ENCODE measurements at regions of chr6 and their contacts with region 1.

Region 1: DNA sequence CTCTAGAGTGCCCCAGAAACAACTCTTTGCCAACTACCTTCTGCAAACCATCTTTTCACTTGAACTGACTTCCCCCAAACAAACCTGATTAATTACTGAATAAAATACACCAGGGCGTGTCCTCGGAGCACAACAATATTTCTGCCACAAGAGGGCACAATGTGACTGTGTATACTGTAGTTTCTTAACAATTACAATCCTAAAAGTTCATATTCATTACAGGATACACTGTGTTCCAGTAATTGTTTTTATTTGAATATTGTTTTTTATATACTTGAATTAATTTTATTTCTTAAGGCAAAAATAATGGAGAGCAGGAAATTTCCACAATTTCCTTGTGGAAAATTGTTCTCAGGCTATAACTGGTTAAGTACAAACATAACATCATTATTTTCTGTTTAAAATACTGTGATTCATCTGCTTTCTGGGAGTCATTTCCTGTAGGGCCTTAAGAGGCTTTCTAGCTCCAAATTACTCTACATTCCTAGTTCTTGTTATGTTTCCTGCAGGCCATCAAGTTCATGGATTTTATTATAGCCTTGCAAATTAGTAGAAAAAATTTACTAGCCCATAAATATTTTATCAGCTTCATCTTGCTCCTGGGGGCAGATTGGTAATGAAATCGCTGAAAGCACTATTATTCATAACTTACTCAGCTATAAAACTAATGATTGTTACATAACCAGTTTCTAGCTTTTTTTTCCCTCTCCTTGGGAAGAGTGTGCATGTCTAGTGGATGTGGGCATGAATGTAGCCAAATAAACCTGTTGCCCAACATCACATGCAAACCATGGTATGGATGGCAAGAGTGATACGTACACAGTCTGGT is 51.9 kb upstream of the SLC22A16 start:
- DNase-seq: peak; percentile 88
- ATAC-seq: peak; percentile 87
- H3K4me3 ChIP-seq: no peak overlapping the region
- H3K27ac ChIP-seq: peak overlapping the region; percentile 73
- H3K4me1 ChIP-seq: peaks cover 13% of the 10 kb centered on the region
- H3K27me3 ChIP-seq: no peaks in the 10 kb centered on the region
- CTCF ChIP-seq: peak; percentile 86
- POLR2A ChIP-seq: no peak
- RAD21 ChIP-seq: peak; percentile 86

Region 2: GRCh38 chr6:110101885-110102284 is 426.4 kb before region 1 on chr6:
- CTCF ChIA-PET with region 1: no interaction called
- POLR2A ChIA-PET with region 1: no interaction called
- dilution Hi-C with region 1: no loop called
- in situ Hi-C with region 1: no loop called
- intact Hi-C with region 1: no loop called
- DNase-seq: no peak
- ATAC-seq: no peak
- H3K4me3 ChIP-seq: no peak overlapping the region
- H3K27ac ChIP-seq: no peak overlapping the region
- H3K4me1 ChIP-seq: 0 out of 2 replicates have a peak, but pooled peaks cover 2% of the 10 kb centered on the region
- H3K27me3 ChIP-seq: no peaks in the 10 kb centered on the region
- CTCF ChIP-seq: no peak
- POLR2A ChIP-seq: no peak
- RAD21 ChIP-seq: no peak

Region 3: GRCh38 chr6:110682460-110682853 is 154.1 kb after region 1 on chr6:
- CTCF ChIA-PET with region 1: no interaction called
- POLR2A ChIA-PET with region 1: no interaction called
- dilution Hi-C with region 1: no loop called
- in situ Hi-C with region 1: loop called (anchors 10 kb)
- intact Hi-C with region 1: loop called (anchors 1 kb)
- DNase-seq: peak; percentile 81
- ATAC-seq: peak; percentile 95
- H3K4me3 ChIP-seq: no peak overlapping the region
- H3K27ac ChIP-seq: no peak overlapping the region
- H3K4me1 ChIP-seq: peaks cover 3% of the 10 kb centered on the region; the same call in 1 of the 2 replicates
- H3K27me3 ChIP-seq: no peaks in the 10 kb centered on the region
- CTCF ChIP-seq: peak; percentile 77
- POLR2A ChIP-seq: no peak
- RAD21 ChIP-seq: peak; percentile 89

Region 4: GRCh38 chr6:110815217-110816109 is 287.1 kb after region 1 on chr6 and contains the start of gene CDK19:
- CTCF ChIA-PET with region 1: no interaction called
- POLR2A ChIA-PET with region 1: no interaction called
- dilution Hi-C with region 1: no loop called
- in situ Hi-C with region 1: no loop called
- intact Hi-C with region 1: loop called (anchors 2 kb)
- DNase-seq: peak; percentile 98
- ATAC-seq: peak; percentile 91
- H3K4me3 ChIP-seq: peak within 1 kb of the TSS; percentile 59
- H3K27ac ChIP-seq: peak within 1 kb of the TSS; percentile 89
- H3K4me1 ChIP-seq: no peaks in the 10 kb centered on the region; the same call in 1 of the 2 replicates
- H3K27me3 ChIP-seq: no peaks in the 10 kb centered on the region
- CTCF ChIP-seq: no peak
- POLR2A ChIP-seq: peak; percentile 86
- RAD21 ChIP-seq: 0 out of 2 replicates have a peak, but pooled peaks have one; percentile 2
- total RNA-seq, gene CDK19: 6.8 and 7.5 TPM in 2 replicates

Region 5: GRCh38 chr6:110958329-110959192 is 430.2 kb after region 1 on chr6 and contains the start of gene GTF3C6:
- CTCF ChIA-PET with region 1: no interaction called
- POLR2A ChIA-PET with region 1: no interaction called
- dilution Hi-C with region 1: no loop called
- in situ Hi-C with region 1: loop called (anchors 10 kb)
- intact Hi-C with region 1: loop called (anchors 2 kb)
- DNase-seq: peak; percentile 91
- ATAC-seq: peak; percentile 99
- H3K4me3 ChIP-seq: peak within 1 kb of the TSS; percentile 89
- H3K27ac ChIP-seq: peak within 1 kb of the TSS; percentile 98
- H3K4me1 ChIP-seq: no peaks in the 10 kb centered on the region
- H3K27me3 ChIP-seq: no peaks in the 10 kb centered on the region
- CTCF ChIP-seq: no peak
- POLR2A ChIP-seq: peak; percentile 91
- RAD21 ChIP-seq: no peak
- total RNA-seq, gene GTF3C6: 10.4 and 42.5 TPM in 2 replicates

Region 6: DNA sequence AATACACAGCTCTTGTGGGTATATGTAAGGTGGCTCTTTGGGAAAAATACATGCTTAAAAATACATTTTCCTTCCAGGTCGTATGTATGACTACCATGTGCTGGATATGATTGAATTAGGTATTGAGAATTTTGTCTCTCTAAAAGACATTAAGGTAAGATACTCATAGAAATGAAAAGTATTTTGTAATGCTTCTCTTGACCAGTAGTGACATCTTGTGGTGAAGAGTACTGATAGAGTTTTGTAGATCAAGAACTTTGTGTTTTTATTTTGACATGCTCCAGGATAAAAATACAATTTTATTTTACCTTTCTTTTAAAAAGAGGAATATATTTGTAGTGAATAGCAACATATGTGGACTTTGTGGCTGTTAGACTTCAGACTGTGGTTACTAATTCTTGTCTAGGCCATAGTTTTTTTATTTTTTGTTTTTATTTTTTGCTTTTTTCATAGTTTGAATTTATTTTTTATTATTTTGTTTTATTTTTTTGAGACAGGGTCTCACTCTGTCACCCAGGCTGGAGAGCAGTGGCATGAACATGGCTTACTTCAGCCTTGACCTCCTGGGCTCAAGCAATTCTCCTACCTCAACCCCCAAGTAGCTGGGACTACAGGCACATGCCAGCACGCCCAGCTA is 471.4 kb after region 1 on chr6:
- CTCF ChIA-PET with region 1: interaction called, 7 read pairs
- POLR2A ChIA-PET with region 1: no interaction called
- dilution Hi-C with region 1: loop called (anchors 10 kb)
- in situ Hi-C with region 1: loop called (anchors 5 kb)
- intact Hi-C with region 1: loop called (anchors 1 kb)
- DNase-seq: peak; percentile 46
- ATAC-seq: peak; percentile 54; the same call in 1 of the 2 replicates
- H3K4me3 ChIP-seq: no peak overlapping the region
- H3K27ac ChIP-seq: no peak overlapping the region
- H3K4me1 ChIP-seq: no peaks in the 10 kb centered on the region
- H3K27me3 ChIP-seq: no peaks in the 10 kb centered on the region
- CTCF ChIP-seq: peak; percentile 56
- POLR2A ChIP-seq: no peak
- RAD21 ChIP-seq: peak; percentile 62

Region 7: GRCh38 chr6:111210194-111210728 is 681.9 kb after region 1 on chr6:
- CTCF ChIA-PET with region 1: no interaction called
- POLR2A ChIA-PET with region 1: no interaction called
- dilution Hi-C with region 1: no loop called
- in situ Hi-C with region 1: loop called (anchors 25 kb)
- intact Hi-C with region 1: loop called (anchors 1 kb)
- DNase-seq: peak; percentile 57
- ATAC-seq: peak; percentile 95
- H3K4me3 ChIP-seq: no peak overlapping the region
- H3K27ac ChIP-seq: no peak overlapping the region
- H3K4me1 ChIP-seq: no peaks in the 10 kb centered on the region
- H3K27me3 ChIP-seq: no peaks in the 10 kb centered on the region; the same call in none of the 2 replicates
- CTCF ChIP-seq: peak; percentile 79
- POLR2A ChIP-seq: no peak
- RAD21 ChIP-seq: peak; percentile 74